ENCODE measurements at regions of chr6 and their contacts with region 1.

Region 1: DNA sequence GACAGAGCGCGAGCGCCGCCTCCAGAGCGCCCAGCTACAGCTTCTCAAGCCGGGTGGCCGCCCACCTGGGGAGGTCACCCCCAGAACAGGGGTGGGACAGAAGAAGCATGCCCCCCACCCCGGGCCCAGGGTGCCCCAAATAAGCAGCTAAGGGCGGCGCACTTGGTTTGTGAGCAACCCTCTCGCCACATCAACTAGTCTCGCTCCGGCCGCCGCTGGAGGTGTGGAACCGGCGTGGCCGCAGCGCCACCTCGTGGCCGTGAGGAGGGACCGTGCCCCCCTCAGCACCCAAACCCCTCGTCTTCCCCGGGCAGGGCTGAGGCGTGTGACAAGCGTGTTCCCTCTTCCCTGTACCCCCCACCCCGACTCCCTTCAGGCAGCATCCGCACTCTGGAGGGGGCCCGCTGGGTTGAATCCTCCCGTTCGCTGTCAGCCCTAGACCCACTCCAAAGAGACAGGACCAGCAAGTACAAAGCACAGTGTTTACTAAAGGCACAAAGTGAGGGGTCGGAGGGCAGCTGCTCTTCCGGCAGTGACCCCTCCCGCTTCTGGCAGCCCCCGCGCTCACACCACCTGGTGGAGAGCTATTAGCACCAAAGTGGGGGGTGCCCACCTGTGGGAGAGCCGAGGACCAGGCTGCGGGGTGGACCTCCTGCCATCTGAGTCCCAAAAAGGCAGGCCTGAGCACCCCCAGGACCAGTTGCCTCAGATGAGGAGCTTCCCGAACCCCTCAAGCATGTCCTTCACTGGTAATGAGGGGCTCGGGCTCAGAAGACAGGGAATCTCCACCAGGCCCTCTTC is 45.4 kb downstream of the MDFI start:
- DNase-seq: peak; percentile 51
- ATAC-seq: peak; percentile 87
- H3K4me3 ChIP-seq: no peak overlapping the region
- H3K27ac ChIP-seq: no peak overlapping the region
- H3K4me1 ChIP-seq: no peaks in the 10 kb centered on the region
- H3K27me3 ChIP-seq: peaks cover under 1% of the 10 kb centered on the region; the same call in 1 of the 2 replicates
- CTCF ChIP-seq: peak; percentile 91
- POLR2A ChIP-seq: peak; percentile 36; the same call in 1 of the 2 replicates
- RAD21 ChIP-seq: peak; percentile 91

Region 2: GRCh38 chr6:41072676-41073623 is 610.8 kb before region 1 on chr6 and contains the start of gene NFYA:
- CTCF ChIA-PET with region 1: no interaction called
- POLR2A ChIA-PET with region 1: no interaction called
- dilution Hi-C with region 1: no loop called
- in situ Hi-C with region 1: no loop called
- intact Hi-C with region 1: loop called (anchors 5 kb)
- DNase-seq: peak; percentile 99
- ATAC-seq: peak; percentile 76
- H3K4me3 ChIP-seq: peak within 1 kb of the TSS; percentile 72
- H3K27ac ChIP-seq: peak within 1 kb of the TSS; percentile 93
- H3K4me1 ChIP-seq: peaks cover 3% of the 10 kb centered on the region
- H3K27me3 ChIP-seq: no peaks in the 10 kb centered on the region
- CTCF ChIP-seq: peak; percentile 60
- POLR2A ChIP-seq: peak; percentile 88
- RAD21 ChIP-seq: peak; percentile 35; the same call in 1 of the 2 replicates
- total RNA-seq, gene NFYA: 21.9 and 28.5 TPM in 2 replicates

Region 3: GRCh38 chr6:41367700-41368099 is 316.0 kb before region 1 on chr6:
- CTCF ChIA-PET with region 1: interaction called, 10 read pairs
- POLR2A ChIA-PET with region 1: no interaction called
- dilution Hi-C with region 1: no loop called
- in situ Hi-C with region 1: loop called (anchors 5 kb)
- intact Hi-C with region 1: loop called (anchors 1 kb)
- DNase-seq: peak; percentile 48
- ATAC-seq: peak; percentile 82
- H3K4me3 ChIP-seq: no peak overlapping the region
- H3K27ac ChIP-seq: no peak overlapping the region
- H3K4me1 ChIP-seq: no peaks in the 10 kb centered on the region; the same call in 1 of the 2 replicates
- H3K27me3 ChIP-seq: peaks cover 29% of the 10 kb centered on the region
- CTCF ChIP-seq: peak; percentile 77
- POLR2A ChIP-seq: no peak
- RAD21 ChIP-seq: peak; percentile 79

Region 4: DNA sequence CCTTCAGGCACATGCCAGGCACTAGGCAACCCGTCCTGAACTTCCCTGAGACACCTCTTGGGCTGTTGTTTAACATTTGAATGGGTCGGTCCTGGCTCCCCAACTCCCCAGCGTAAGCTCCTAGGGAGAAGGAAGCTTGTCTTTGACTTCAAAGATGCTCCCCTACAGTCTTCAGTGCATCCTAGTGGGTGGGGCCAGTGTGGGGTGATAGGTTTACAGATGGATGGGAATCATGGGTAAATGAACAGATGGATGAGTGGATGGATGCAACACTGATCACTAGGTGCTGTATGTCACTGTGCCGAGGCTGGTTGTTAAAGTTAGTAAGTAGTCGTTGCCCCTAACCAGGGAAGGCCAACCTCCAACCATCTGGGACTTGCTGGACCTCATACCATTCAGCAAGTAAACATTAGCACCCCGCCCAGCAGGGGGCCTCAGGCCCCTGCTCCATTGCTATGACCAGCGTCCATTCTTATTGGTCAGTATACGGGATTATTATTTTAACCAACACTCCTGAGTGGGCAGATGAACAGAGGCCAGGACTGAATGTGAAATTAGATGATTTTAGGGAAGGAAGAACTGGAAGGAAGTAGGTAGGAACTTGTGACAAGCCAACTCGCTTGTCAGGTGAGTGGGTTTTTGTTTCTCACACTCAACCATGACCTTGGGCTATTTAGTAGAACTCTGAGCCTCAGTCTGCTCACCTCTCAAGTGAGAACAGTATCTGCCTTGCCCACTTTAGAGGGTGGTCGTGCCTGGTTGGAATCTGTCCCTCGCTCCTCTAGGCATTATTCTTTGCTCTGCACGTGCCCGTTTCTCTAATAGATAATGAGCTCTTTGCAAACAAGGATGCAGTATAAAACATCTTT is 220.4 kb before region 1 on chr6:
- CTCF ChIA-PET with region 1: no interaction called
- POLR2A ChIA-PET with region 1: no interaction called
- dilution Hi-C with region 1: no loop called
- in situ Hi-C with region 1: no loop called
- intact Hi-C with region 1: loop called (anchors 2 kb)
- DNase-seq: peak; percentile 77
- ATAC-seq: peak; percentile 99
- H3K4me3 ChIP-seq: no peak overlapping the region
- H3K27ac ChIP-seq: no peak overlapping the region
- H3K4me1 ChIP-seq: no peaks in the 10 kb centered on the region
- H3K27me3 ChIP-seq: peaks cover 27% of the 10 kb centered on the region
- CTCF ChIP-seq: peak; percentile 92
- POLR2A ChIP-seq: 0 out of 2 replicates have a peak, but pooled peaks have one; percentile 32
- RAD21 ChIP-seq: peak; percentile 91

Region 5: DNA sequence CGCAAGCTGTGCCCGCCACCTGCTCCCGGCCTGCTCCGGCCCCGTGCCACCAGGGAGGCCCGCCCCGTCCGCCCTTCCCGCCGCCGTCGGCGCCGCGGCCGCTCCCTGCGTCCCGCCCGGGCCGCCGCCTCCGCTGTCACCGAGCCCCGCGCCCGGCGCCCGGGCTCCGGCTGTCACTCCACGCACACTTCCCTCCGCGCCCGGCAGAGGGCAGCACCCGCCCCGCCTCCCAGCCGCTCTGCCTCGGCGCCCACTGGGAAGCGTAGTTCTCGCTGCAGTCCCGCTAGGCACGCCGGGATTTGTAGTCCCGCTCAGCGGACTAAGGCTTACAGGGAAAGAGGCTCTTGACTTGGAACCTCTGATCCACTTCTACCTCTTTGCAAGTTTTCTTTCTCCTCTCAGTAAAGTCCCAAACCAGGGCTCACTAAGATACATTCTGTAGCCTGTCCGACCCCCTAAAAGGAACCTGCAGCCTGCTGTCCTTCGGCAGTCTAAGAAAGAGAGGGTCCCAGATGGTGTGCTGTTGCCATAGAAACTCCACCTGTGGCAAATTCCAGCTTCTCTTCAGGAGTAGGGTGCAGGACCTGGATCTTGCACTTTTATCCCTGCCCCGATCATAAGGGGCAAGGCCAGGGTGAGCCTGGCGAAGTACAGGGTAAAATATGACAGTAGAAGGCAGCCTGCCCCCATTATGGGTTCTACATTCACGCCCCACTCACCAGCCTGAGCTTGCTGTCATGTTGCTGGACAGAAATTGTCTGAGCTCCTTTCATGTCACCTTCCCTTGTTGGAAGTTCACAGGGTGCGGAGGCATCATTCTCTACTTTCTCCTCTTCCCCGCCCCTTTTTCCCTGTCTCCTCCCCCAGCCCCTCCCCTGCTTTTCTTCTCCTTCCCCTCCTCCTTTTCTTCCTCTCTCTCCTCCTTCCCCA is 52.0 kb after region 1 on chr6 and contains the start of gene TFEB:
- CTCF ChIA-PET with region 1: no interaction called
- POLR2A ChIA-PET with region 1: no interaction called
- dilution Hi-C with region 1: no loop called
- in situ Hi-C with region 1: no loop called
- intact Hi-C with region 1: loop called (anchors 1 kb)
- DNase-seq: peak; percentile 85
- ATAC-seq: peak; percentile 75
- H3K4me3 ChIP-seq: peak within 1 kb of the TSS; percentile 88
- H3K27ac ChIP-seq: peak within 1 kb of the TSS; percentile 70
- H3K4me1 ChIP-seq: peaks cover 13% of the 10 kb centered on the region
- H3K27me3 ChIP-seq: peaks cover 2% of the 10 kb centered on the region; the same call in 1 of the 2 replicates
- CTCF ChIP-seq: peak; percentile 99
- POLR2A ChIP-seq: no peak
- RAD21 ChIP-seq: peak; percentile 63
- total RNA-seq, gene TFEB: 4.4 and 4.5 TPM in 2 replicates

Measured in IMR-90 (cell line).